Posterior vena cava (tissue), 2 donors: ENCODE measurements at regions of chr1 and their contacts with region 1.

Region 1: GRCh38 chr1:231357831-231358354 is 19.8 kb downstream of the SPRTN start:
- DNase-seq: no peak

Region 2: GRCh38 chr1:231528172-231529029 is 170.5 kb after region 1 on chr1 and contains the start of gene TSNAX:
- intact Hi-C with region 1: loop called in 1 of 2 experiments (anchors 10 kb)
- DNase-seq: peak; percentile 97
- total RNA-seq, gene TSNAX: 41.4 to 42.7 TPM

Region 3: GRCh38 chr1:231603598-231604275 is 245.8 kb after region 1 on chr1:
- intact Hi-C with region 1: loop called (anchors 5 to 10 kb)
- DNase-seq: no peak